AG04450 (cell line): ENCODE measurements at regions of chr1 and their contacts with region 1.

Region 1: GRCh38 chr1:69737527-69738185 is 169.9 kb downstream of the LRRC7 start:
- DNase-seq: peak; percentile 37
- H3K4me3 ChIP-seq: no peak overlapping the region
- H3K27ac ChIP-seq: no peak overlapping the region
- H3K27me3 ChIP-seq: no peaks in the 10 kb centered on the region
- CTCF ChIP-seq: peak; percentile 82

Region 2: GRCh38 chr1:68470388-68470970 is 1267.2 kb before region 1 on chr1:
- CTCF ChIA-PET with region 1: interaction called, 48 read pairs
- POLR2A ChIA-PET with region 1: no interaction called
- DNase-seq: no peak
- H3K4me3 ChIP-seq: no peak overlapping the region
- H3K27ac ChIP-seq: no peak overlapping the region
- H3K27me3 ChIP-seq: no peaks in the 10 kb centered on the region
- CTCF ChIP-seq: peak; percentile 82

Region 3: DNA sequence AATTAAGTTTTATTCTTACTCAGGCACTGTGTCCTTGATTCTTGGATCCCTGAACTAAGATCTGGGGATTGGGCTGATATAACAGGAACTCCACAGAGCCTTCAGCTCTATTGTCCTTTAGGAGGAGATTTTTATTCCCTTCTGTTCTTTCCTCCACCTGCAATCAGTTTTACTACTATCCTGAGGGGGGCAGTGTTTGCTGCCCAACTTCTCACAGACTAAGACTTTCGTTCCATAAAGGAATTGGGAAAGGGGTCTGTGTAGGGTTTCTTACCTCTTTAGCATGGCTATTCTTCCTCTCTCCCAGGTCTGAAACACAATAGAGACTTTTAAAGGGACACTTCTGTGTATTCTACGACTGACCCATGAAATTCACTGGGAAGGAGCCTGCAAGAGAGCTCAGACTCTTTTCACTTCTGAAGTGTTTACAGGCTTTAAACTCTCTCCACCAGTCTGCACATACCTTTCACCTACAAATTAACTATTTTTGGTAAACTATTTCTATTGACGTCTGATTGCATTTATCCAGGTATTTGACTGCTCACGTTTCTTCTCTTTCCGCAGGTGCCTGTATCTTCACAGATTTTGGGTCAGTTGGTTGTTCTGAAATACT is 1137.5 kb before region 1 on chr1:
- CTCF ChIA-PET with region 1: interaction called, 10 read pairs
- POLR2A ChIA-PET with region 1: no interaction called
- DNase-seq: no peak
- H3K4me3 ChIP-seq: no peak overlapping the region
- H3K27ac ChIP-seq: no peak overlapping the region
- H3K27me3 ChIP-seq: no peaks in the 10 kb centered on the region
- CTCF ChIP-seq: peak; percentile 71

Region 4: GRCh38 chr1:69700770-69701169 is 36.9 kb before region 1 on chr1:
- CTCF ChIA-PET with region 1: no interaction called
- POLR2A ChIA-PET with region 1: no interaction called
- DNase-seq: no peak
- H3K4me3 ChIP-seq: no peak overlapping the region
- H3K27ac ChIP-seq: no peak overlapping the region
- H3K27me3 ChIP-seq: no peaks in the 10 kb centered on the region
- CTCF ChIP-seq: peak; percentile 49

Region 5: DNA sequence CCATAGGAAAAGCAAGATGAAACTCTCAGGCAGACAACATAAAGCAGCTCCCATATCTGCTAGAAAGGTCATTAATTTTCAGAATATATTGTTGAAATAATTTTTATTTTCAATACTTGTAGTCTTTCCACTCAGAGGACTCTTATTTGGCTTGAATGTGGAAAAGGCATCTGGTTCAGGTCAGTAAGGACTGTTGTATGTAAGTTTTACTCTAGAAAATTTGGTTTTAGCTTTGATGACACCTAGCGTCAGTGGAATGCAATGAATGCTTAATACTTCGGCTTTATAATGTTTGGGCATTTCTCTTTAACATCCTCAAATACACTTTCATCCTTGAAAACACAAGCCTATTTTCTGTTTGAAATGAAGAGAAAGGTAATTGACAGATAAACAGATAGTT is 404.4 kb after region 1 on chr1:
- CTCF ChIA-PET with region 1: interaction called, 18 read pairs
- POLR2A ChIA-PET with region 1: no interaction called
- DNase-seq: no peak
- H3K4me3 ChIP-seq: no peak overlapping the region
- H3K27ac ChIP-seq: no peak overlapping the region
- H3K27me3 ChIP-seq: no peaks in the 10 kb centered on the region
- CTCF ChIP-seq: peak; percentile 60